ENCODE measurements at regions of chr7 and their contacts with region 1.

Region 1: GRCh38 chr7:125670926-125671572 is 741.4 kb upstream of the POT1 start:
- DNase-seq: no peak
- H3K4me3 Mint-ChIP-seq: no peak overlapping the region
- H3K27ac Mint-ChIP-seq: no peak overlapping the region
- H3K4me1 Mint-ChIP-seq: no peaks in the 10 kb centered on the region
- H3K27me3 Mint-ChIP-seq: no peaks in the 10 kb centered on the region

Region 2: GRCh38 chr7:125061776-125062397 is 609.2 kb before region 1 on chr7:
- CTCF ChIA-PET with region 1: no interaction called
- intact Hi-C with region 1: loop called (anchors 2 kb)
- DNase-seq: no peak
- H3K4me3 Mint-ChIP-seq: no peak overlapping the region
- H3K27ac Mint-ChIP-seq: no peak overlapping the region
- H3K4me1 Mint-ChIP-seq: no peaks in the 10 kb centered on the region
- H3K27me3 Mint-ChIP-seq: no peaks in the 10 kb centered on the region

Region 3: GRCh38 chr7:125683156-125683555 is 12.1 kb after region 1 on chr7:
- CTCF ChIA-PET with region 1: no interaction called
- intact Hi-C with region 1: no loop called
- DNase-seq: no peak
- H3K4me3 Mint-ChIP-seq: no peak overlapping the region
- H3K27ac Mint-ChIP-seq: no peak overlapping the region
- H3K4me1 Mint-ChIP-seq: no peaks in the 10 kb centered on the region
- H3K27me3 Mint-ChIP-seq: no peaks in the 10 kb centered on the region

Region 4: GRCh38 chr7:125899577-125899976 is 228.5 kb after region 1 on chr7:
- CTCF ChIA-PET with region 1: no interaction called
- intact Hi-C with region 1: no loop called
- DNase-seq: no peak
- H3K4me3 Mint-ChIP-seq: no peak overlapping the region
- H3K27ac Mint-ChIP-seq: no peak overlapping the region
- H3K4me1 Mint-ChIP-seq: no peaks in the 10 kb centered on the region
- H3K27me3 Mint-ChIP-seq: no peaks in the 10 kb centered on the region